H1 (cell line): ENCODE measurements at regions of chr5 and their contacts with region 1.

Region 1: DNA sequence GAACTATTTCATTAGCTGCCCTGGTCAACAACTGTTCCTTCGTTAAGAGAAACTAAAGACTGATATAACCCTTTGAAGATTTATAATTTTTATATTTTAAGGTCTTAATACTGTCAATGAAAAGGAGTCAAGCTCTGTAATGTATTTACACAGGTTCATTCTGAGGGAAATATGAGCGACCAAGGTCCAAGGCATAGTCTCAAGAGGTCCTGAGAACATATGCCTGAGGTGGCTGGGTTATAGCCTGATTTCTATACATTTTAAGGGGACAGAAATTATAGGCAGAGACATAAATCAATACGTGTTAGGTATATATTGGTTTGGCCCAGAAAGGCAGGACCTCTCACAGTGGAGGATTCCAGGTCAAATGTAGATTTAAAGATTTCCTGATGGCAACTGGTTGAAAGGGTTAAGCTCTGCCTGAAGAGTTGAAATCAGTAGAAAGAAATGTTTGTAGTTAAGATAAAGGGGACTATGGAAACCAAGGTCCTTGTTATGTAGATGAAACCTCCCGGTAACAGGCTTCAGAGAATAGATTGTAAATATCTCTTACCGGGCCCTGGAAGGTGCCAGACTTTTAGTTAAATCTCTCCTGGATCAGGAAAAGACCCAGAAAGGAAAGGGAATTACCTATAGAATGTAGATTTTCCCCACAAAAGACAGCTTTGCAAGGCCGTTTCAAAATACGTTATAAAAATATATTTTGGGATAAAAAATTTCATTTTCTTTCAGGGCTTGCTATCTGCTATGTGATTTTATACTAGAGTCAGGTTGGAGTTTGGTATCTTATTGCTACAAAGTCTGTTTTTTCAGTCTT is 107.3 kb upstream of the PRLR start:
- DNase-seq: no peak
- H3K4me3 ChIP-seq: peak overlapping the region in 1 of 4 experiments; percentile 29; a peak in 1 of 8 replicates
- H3K27ac ChIP-seq: peak overlapping the region; percentile 92
- H3K4me1 ChIP-seq: peaks cover 8 to 25% (median 16%) of the 10 kb centered on the region in 4 experiments
- H3K27me3 ChIP-seq: no peaks in the 10 kb centered on the region
- CTCF ChIP-seq: no peak
- EP300 ChIP-seq: peak in 1 of 2 experiments; percentile 23; a peak in 1 of 3 replicates
- POLR2A ChIP-seq: peak in 1 of 2 experiments; percentile 44; a peak in 1 of 3 replicates
- RAD21 ChIP-seq: no peak

Region 2: DNA sequence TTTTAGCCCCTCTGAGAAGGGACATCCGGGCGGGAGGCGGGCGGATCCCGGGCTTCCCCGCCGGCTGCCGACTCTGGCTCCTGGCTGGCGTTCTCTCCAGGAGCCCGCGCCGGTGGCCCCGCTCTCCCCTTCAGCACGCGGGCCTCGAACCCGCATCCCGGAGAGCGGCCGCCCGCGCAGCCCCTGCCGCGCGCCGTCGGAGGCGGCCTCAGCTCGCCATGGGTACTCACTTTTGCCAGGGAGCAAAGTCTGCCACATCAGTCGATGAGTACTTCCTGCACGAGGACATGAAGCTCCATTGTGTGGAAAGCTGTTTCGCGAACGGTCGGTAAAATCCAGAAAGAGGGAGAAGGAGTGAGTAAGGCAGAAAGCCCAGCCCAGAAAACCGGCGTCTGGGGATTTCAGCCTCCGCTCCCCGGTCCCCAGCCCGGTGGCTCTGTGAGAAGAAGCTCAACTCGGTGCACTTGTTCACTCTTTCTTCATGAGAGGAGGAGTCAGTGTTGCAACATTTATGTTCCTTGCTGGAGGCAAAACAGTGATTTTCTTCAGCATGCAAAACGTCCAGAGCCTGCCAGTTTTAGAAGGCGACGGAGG is 107.4 kb before region 1 on chr5 and contains the start of gene PRLR:
- CTCF ChIA-PET with region 1: interaction called, 5 read pairs
- POLR2A ChIA-PET with region 1: interaction called, 13 read pairs
- DNase-seq: peak in 1 of 2 experiments; percentile 61
- H3K4me3 ChIP-seq: peak within 1 kb of the TSS; percentile 49 to 75 (median 59)
- H3K27ac ChIP-seq: no peak within 1 kb of the TSS
- H3K4me1 ChIP-seq: peaks cover 0 to 3% (median 0%) of the 10 kb centered on the region in 4 experiments; a peak in 2 of 7 replicates
- H3K27me3 ChIP-seq: no peaks in the 10 kb centered on the region; a peak in 1 of 7 replicates
- CTCF ChIP-seq: no peak
- EP300 ChIP-seq: no peak
- POLR2A ChIP-seq: no peak
- RAD21 ChIP-seq: no peak
- total RNA-seq, gene PRLR: 2.5 and 2.7 TPM in 2 replicates

Region 3: DNA sequence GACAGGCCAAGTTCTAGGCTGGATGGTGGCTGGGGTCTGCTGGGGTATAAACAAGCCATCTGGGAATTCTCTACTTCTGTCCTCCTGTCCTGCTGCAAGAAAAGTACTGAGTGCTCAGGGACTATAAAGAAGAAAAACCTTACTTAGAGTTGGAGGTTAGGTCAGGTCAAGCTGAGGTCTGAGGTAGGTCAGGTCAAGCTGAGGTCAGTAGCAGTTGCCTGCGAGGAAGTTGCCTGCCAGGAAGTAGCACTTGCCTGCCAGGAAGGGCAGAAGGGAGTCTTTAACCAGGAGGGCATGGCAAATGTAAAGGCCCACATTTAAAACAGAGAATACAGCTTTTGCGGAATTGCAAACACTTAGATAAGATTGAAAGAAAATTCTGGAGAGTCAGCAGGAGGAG is 55.9 kb before region 1 on chr5:
- CTCF ChIA-PET with region 1: no interaction called
- POLR2A ChIA-PET with region 1: no interaction called
- DNase-seq: no peak
- H3K4me3 ChIP-seq: no peak overlapping the region
- H3K27ac ChIP-seq: no peak overlapping the region
- H3K4me1 ChIP-seq: no peaks in the 10 kb centered on the region
- H3K27me3 ChIP-seq: no peaks in the 10 kb centered on the region
- CTCF ChIP-seq: no peak
- EP300 ChIP-seq: no peak
- POLR2A ChIP-seq: no peak
- RAD21 ChIP-seq: no peak